Heart right ventricle (tissue), 16 donors: ENCODE measurements at regions of chr18 and their contacts with region 1.

Region 1: GRCh38 chr18:47953471-47953931 is 23.0 kb upstream of the SMAD2 start:
- DNase-seq: peak in 1 of 2 donors; percentile 15
- ATAC-seq: peak in 7 of 8 donors; percentile 39 to 72 (median 45)
- H3K4me3 ChIP-seq: no peak overlapping the region
- H3K27ac ChIP-seq: peak overlapping the region in 2 of 10 donors; percentile 14 to 43
- H3K4me1 ChIP-seq: peaks cover 0 to 22% (median 9%) of the 10 kb centered on the region in 9 donors
- H3K27me3 ChIP-seq: no peaks in the 10 kb centered on the region
- CTCF ChIP-seq: no peak

Region 2: GRCh38 chr18:47815486-47816280 is 137.8 kb before region 1 on chr18:
- intact Hi-C with region 1: loop called in 1 of 10 experiments (anchors 10 kb)
- DNase-seq: no peak
- ATAC-seq: peak in 1 of 8 donors; percentile 26
- H3K4me3 ChIP-seq: no peak overlapping the region
- H3K27ac ChIP-seq: no peak overlapping the region
- H3K4me1 ChIP-seq: peaks cover 0 to 16% (median 0%) of the 10 kb centered on the region in 9 donors
- H3K27me3 ChIP-seq: no peaks in the 10 kb centered on the region
- CTCF ChIP-seq: no peak

Region 3: GRCh38 chr18:47846431-47846830 is 107.1 kb before region 1 on chr18:
- intact Hi-C with region 1: no loop called
- DNase-seq: no peak
- ATAC-seq: no peak
- H3K4me3 ChIP-seq: no peak overlapping the region
- H3K27ac ChIP-seq: no peak overlapping the region
- H3K4me1 ChIP-seq: peaks cover 0 to 10% (median 0%) of the 10 kb centered on the region in 9 donors
- H3K27me3 ChIP-seq: no peaks in the 10 kb centered on the region
- CTCF ChIP-seq: no peak

Region 4: DNA sequence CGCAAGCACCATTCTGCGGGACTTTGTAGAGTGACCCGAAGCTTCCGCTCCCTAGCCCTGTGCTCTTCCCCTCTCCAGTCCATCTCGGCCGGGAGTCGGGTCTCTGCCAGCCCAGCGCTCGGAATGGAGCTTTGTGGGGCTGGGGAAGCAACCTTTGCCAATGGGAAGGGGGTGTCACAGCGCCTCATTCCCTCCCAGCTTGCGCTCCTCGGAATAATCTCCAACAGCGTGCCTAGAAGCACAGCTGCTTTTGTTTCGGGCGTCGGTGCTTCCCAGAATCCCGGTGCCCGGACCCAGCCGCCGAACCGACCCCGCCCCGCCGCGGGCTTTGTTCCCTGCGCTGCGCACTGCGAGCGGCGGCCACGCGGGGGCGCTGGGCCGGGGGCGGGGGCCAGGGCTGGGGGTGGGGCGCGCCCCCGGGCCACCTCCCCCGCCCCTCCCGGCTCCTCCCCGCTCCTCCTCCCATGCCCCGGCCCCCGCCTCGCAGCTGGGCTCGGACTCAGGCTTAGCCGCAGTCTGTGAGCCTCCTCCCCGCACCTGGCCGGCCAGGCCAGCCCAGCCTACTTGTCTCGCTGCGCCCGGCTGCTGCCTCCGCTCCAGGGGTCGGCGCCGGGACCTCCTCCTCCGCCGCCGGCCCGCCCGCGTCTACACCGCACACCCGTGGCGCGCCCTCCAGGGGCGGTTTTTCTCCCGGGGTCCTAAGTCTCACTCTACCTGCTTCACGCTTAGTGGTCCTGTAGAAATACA is 54.6 kb after region 1 on chr18:
- intact Hi-C with region 1: no loop called
- DNase-seq: peak; percentile 68 to 69
- ATAC-seq: peak; percentile 60 to 90 (median 85)
- H3K4me3 ChIP-seq: peak overlapping the region; percentile 22 to 68 (median 60)
- H3K27ac ChIP-seq: peak overlapping the region in 5 of 10 donors; percentile 30 to 68 (median 48)
- H3K4me1 ChIP-seq: peaks cover 0 to 27% (median 20%) of the 10 kb centered on the region in 9 donors
- H3K27me3 ChIP-seq: peaks cover 0 to 8% (median 0%) of the 10 kb centered on the region in 7 donors
- CTCF ChIP-seq: peak; percentile 59 to 94 (median 73)